ENCODE measurements at regions of chrX and their contacts with region 1.

Region 1: DNA sequence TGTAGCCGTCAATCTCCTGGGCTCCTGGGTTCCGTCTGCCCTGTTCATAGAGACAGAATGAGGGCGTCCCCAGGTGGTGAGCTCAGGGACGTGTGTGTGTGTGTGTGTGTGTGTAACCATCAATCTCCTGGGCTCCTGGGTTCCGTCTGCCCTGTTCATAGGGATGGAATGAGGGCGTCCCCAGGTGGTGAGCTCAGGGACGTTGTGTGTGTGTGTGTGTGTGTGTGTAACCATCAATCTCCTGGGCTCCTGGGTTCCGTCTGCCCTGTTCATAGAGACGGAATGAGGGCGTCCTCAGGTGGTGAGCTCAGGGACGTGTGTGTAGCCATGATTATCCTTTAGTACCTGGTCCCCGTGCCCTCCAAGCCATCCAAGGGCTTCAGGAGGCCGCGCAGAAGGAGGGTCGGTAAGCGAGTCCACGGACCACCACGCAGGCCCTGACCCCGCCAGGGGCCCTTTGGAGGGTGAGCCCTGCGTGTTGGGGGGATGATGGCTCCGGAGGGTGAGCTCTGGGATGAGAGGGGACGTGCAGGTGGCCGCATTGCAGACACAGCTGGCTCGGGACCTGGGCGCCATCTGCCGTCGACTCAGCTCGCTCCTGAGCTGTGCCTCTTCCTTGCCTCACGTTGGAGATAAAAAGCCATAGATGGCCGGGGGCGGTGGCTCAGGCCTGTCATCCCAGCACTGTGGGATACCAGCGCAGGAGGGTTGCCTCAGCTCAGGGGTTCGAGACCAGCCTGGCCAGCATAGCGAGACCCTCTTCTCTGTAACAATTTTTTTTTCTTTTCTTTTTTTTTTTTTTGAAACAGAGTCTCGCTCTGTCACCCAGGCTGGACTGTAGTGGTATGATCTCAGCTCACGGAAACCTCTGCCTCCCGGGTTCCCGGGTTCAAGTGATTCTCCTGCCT is 5.4 kb upstream of the GTPBP6 start:
- DNase-seq: peak; percentile 86
- H3K4me3 ChIP-seq: peak overlapping the region in 1 of 3 experiments; percentile 29
- H3K27ac ChIP-seq: no peak overlapping the region
- H3K4me1 ChIP-seq: peaks cover 8% of the 10 kb centered on the region
- H3K27me3 ChIP-seq: peaks cover 2% of the 10 kb centered on the region
- CTCF ChIP-seq: peak; percentile 3 to 54

Region 2: GRCh38 chrX:386768-387575 is 63.0 kb after region 1 on chrX and contains the start of gene PPP2R3B:
- CTCF ChIA-PET with region 1: no interaction called
- dilution Hi-C with region 1: no loop called
- in situ Hi-C with region 1: no loop called
- intact Hi-C with region 1: loop called (anchors 2 kb)
- DNase-seq: peak; percentile 96
- H3K4me3 ChIP-seq: peak within 1 kb of the TSS; percentile 67 to 94 (median 77)
- H3K27ac ChIP-seq: peak within 1 kb of the TSS; percentile 93
- H3K4me1 ChIP-seq: no peaks in the 10 kb centered on the region
- H3K27me3 ChIP-seq: no peaks in the 10 kb centered on the region
- CTCF ChIP-seq: no peak
- total RNA-seq, gene PPP2R3B: 9.2 to 26.8 TPM

Region 3: DNA sequence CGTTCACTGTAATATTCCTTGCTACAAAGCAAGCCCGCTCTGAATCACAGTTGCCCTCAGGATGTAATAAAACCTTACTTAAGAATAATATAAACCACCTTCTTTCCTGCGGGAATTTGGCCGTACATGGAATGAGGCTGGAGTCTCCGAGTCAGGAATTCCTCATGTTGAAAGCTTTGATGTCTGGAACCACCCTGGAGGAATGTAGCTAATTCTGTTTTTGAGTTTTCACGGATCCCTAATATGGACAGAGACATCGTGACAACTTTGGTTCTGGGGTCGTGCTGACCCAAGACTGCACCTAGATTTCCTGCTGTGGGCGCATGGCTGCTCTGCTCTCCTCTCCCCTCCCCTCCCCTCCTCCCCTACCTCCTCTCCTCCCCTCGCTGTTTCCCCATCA is 830.0 kb after region 1 on chrX:
- CTCF ChIA-PET with region 1: no interaction called
- dilution Hi-C with region 1: no loop called
- in situ Hi-C with region 1: no loop called
- intact Hi-C with region 1: loop called (anchors 10 kb)
- DNase-seq: no peak
- H3K4me3 ChIP-seq: no peak overlapping the region
- H3K27ac ChIP-seq: no peak overlapping the region
- H3K4me1 ChIP-seq: no peaks in the 10 kb centered on the region
- H3K27me3 ChIP-seq: no peaks in the 10 kb centered on the region
- CTCF ChIP-seq: no peak

Measured in mammary epithelial cell (primary cell).